GM10248 (cell line): ENCODE measurements at regions of chr10 and their contacts with region 1.

Region 1: DNA sequence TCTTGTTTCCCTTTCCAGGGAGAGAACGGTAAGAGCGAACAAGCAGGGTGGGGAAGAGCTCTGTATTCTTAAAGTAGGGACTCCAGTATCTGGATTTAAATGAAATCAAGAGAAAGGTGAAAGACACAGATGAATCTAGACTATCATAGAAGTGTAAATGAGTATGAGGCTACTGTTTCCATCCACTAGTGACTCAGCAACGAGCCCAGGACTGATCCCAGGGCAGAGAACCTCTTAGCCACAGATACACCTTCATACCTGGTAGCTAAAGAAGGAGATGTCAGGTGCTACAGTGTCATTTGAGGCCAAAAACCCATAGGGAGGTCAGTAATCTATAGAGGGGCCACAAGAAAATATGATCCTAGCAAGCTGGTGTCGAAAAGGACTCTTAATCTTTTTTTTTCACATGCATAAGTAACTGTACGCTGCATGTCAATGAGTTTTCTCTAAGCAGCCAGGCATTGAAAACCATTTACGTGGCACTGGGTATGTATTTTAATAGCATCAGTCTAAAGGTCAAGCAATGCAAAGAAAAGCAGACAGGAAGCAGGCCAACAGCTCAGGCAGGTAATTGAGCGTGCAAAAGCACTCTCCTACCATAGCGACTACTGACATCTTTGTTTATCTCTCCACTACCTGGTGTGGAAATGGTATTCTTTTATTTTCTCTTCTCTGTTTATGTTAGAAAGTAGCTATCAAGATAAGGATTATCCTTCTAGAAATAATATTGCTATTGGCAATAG is 91.5 kb upstream of the EGR2 start:
- DNase-seq: peak; percentile 24
- CTCF ChIP-seq: no peak

Region 2: GRCh38 chr10:62732841-62733653 is 174.6 kb before region 1 on chr10:
- CTCF ChIA-PET with region 1: no interaction called
- POLR2A ChIA-PET with region 1: no interaction called
- DNase-seq: peak; percentile 64
- CTCF ChIP-seq: no peak

Region 3: GRCh38 chr10:62895058-62895457 is 12.6 kb before region 1 on chr10:
- CTCF ChIA-PET with region 1: interaction called, 10 read pairs
- POLR2A ChIA-PET with region 1: no interaction called
- DNase-seq: no peak
- CTCF ChIP-seq: no peak

Region 4: GRCh38 chr10:63021225-63021624 is 113.6 kb after region 1 on chr10:
- CTCF ChIA-PET with region 1: no interaction called
- POLR2A ChIA-PET with region 1: no interaction called
- DNase-seq: no peak
- CTCF ChIP-seq: no peak